ENCODE measurements at regions of chr5 and their contacts with region 1.

Region 1: GRCh38 chr5:122882837-122883236 is 37.4 kb downstream of the SNX24 start:
- DNase-seq: no peak
- H3K4me3 ChIP-seq: no peak overlapping the region
- H3K27ac ChIP-seq: peak overlapping the region in 5 of 59 donors; percentile 7 to 47 (median 40)
- H3K27me3 ChIP-seq: no peaks in the 10 kb centered on the region
- CTCF ChIP-seq: no peak

Region 2: DNA sequence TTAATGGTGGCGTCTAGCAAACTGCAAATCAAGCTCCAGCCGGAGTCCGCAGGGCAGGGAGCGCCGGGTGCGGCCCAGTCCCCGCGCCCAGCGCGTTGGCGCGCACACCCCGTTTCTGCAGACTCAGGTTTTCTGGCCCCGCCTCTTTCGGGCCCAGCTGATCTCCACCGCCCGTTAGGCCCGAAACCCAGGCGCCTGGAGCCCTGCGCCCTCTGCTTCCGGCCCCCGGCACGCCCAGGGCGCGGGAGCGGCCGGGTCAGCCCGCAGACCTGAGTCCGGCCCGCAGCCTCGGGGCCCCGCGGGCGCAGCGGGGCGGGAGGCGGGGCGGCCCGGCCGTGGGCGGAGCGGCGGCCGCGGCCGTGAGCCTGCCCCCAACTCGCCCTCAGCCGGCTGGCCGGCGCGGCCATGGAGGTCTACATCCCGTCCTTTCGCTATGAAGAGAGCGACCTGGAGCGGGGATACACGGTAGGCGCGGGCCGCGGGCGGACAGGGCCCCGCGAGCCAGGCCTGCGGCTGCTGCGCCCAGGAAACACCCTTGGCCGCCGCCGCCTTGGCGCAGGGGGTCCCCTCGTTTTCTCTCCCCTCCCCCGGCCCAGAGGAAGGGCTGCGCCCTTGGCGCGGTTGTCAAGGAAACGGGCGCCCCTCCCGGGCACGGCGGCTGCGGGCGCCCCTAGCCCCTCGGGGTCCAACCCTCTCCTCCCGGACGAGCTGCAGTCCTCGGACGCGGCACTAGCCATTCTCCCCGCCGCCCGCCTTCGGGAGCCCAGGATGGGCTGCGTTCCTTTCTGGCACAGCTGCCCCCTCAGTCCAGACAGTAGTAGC is 37.4 kb before region 1 on chr5 and contains the start of gene SNX24:
- intact Hi-C with region 1: loop called in 1 of 2 experiments (anchors 5 kb)
- DNase-seq: peak; percentile 53 to 81 (median 68)
- H3K4me3 ChIP-seq: peak within 1 kb of the TSS; percentile 61 to 93 (median 85)
- H3K27ac ChIP-seq: peak within 1 kb of the TSS in 57 of 59 donors; percentile 20 to 94 (median 83)
- H3K27me3 ChIP-seq: no peaks in the 10 kb centered on the region
- CTCF ChIP-seq: peak in 14 of 56 donors; percentile 2 to 28 (median 14)
- total RNA-seq, gene SNX24: 16.5 to 36.8 (median 24.1) TPM

Region 3: DNA sequence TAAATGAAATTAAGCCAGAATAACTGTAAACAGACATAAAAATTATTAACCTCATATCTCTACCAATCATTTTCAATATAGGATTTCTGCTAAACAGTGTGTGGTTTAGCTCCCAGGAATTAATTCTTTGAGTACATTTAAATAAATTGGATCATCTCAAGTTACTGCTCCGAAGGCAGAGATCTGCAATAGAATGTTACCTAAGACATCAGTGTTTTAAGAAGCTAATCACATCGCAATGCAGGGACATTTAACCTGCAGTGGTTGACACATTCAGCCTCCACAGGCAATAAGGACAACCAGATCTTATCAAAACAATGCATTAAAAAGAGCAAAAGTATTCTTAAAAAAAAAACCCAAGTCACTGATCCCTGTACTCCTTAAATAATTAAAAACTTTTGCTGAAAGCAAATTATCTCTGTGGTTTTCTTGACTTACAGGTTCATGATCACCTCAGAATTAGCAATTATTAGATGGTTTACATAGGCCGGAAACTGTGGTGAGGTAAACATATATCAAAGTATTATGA is 251.9 kb after region 1 on chr5:
- intact Hi-C with region 1: no loop called
- DNase-seq: no peak
- H3K4me3 ChIP-seq: no peak overlapping the region
- H3K27ac ChIP-seq: no peak overlapping the region
- H3K27me3 ChIP-seq: no peaks in the 10 kb centered on the region
- CTCF ChIP-seq: no peak

Region 4: GRCh38 chr5:123285122-123286023 is 402.5 kb after region 1 on chr5:
- intact Hi-C with region 1: no loop called
- DNase-seq: no peak
- H3K4me3 ChIP-seq: peak overlapping the region in 38 of 59 donors; percentile 3 to 61 (median 36)
- H3K27ac ChIP-seq: no peak overlapping the region
- H3K27me3 ChIP-seq: peaks cover 0 to 39% (median 8%) of the 10 kb centered on the region in 45 donors
- CTCF ChIP-seq: no peak